ENCODE measurements at regions of chr13 and their contacts with region 1.

Region 1: DNA sequence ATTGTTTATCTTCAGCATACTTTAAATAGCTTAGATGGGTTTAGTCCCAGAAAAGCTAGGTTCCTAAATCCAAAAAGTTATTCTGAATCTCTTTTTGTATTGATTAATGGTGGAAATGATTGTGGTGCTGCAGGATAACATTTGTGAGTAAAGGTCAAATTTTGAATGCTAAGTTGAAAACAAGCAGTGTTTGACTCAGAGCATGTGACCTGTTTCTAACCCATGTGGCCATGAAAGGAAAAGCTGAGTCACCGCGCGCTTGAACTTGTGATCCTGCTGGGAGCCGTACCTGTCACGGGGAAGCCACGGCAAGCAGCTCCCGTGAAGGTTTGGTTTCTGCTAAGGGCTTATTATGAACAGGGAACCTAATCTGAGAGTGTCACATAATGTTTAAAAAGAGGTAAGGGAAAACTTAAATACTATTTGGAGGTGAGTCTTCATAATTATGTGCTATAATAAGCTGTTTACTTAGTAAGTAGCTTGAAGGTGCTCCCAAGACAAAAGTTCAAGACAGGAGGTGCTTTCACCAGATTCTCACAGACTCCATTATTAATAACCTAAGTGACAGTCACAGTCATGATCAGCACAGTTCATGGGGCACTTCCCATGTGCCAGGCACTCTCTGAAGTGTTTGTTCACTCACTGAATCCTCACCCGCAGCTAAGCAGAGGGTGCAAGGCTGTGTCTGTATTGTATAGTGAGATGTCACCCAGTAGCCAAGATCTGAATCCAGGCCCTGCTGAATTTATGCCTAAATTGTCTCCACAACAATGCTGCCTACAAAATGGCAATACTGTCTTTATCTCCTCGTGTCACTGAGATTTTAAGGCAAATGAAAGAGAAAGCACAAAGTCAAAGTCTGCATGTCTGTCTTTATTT is 286.5 kb downstream of the MYO16 start:
- DNase-seq: peak; percentile 95
- H3K4me3 Mint-ChIP-seq: peak overlapping the region; percentile 61
- H3K27ac Mint-ChIP-seq: peak overlapping the region; percentile 90
- H3K4me1 Mint-ChIP-seq: peaks cover 33% of the 10 kb centered on the region
- H3K27me3 Mint-ChIP-seq: no peaks in the 10 kb centered on the region
- CTCF ChIP-seq: no peak

Region 2: DNA sequence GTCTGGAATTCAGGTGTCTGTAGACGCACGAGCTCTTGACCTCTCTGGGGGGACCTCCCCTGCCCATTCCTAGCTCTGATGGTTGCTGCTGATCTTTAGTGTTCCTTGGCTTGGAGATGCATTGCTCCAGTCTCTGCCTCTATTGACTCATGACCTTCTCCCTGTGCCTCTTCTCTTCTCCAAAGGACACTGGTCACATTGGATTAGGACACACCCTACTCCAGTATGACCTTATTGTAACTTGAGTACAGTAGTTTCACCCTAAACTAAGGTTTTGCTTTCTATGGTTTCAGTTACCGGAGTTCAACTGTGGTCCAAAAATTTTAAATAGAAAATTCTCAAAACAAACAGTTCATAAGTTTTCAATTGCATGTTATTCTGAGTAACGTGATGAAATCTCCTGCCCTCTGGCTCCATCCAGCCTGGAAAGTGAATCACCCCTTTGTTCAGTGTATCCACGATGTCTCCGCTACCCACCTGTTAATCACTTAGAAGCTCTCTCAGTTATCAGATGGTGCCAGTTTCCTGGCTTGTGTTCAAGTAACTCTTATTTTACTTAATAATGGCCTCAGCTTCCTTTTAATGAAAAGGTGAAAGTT is 13.2 kb before region 1 on chr13:
- CTCF ChIA-PET with region 1: interaction called, 19 read pairs
- POLR2A ChIA-PET with region 1: interaction called, 3 read pairs
- intact Hi-C with region 1: no loop called
- DNase-seq: peak; percentile 77
- H3K4me3 Mint-ChIP-seq: no peak overlapping the region
- H3K27ac Mint-ChIP-seq: no peak overlapping the region
- H3K4me1 Mint-ChIP-seq: peaks cover 9% of the 10 kb centered on the region
- H3K27me3 Mint-ChIP-seq: no peaks in the 10 kb centered on the region
- CTCF ChIP-seq: no peak

Region 3: DNA sequence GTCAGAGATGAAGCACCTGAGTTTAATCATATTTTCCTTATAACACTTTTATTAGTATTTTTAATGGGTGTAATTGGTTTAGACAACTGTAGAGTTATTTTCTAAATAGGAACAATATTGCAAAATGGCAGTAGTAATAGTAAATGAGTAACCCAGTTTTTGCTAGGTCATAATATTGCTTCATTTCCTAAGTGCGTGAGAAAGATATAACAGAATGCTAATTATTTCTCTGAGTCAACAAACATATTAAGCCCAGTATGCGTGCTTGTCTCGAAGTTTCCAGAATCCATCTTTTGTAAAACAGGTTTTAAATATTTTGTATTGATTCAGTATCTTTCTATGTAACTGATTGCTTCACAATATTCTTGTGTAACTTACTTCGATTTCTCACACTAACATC is 28.9 kb after region 1 on chr13:
- CTCF ChIA-PET with region 1: interaction called, 10 read pairs
- POLR2A ChIA-PET with region 1: interaction called, 6 read pairs
- intact Hi-C with region 1: no loop called
- DNase-seq: peak; percentile 79
- H3K4me3 Mint-ChIP-seq: no peak overlapping the region
- H3K27ac Mint-ChIP-seq: no peak overlapping the region
- H3K4me1 Mint-ChIP-seq: peaks cover 8% of the 10 kb centered on the region
- H3K27me3 Mint-ChIP-seq: no peaks in the 10 kb centered on the region
- CTCF ChIP-seq: no peak

Region 4: DNA sequence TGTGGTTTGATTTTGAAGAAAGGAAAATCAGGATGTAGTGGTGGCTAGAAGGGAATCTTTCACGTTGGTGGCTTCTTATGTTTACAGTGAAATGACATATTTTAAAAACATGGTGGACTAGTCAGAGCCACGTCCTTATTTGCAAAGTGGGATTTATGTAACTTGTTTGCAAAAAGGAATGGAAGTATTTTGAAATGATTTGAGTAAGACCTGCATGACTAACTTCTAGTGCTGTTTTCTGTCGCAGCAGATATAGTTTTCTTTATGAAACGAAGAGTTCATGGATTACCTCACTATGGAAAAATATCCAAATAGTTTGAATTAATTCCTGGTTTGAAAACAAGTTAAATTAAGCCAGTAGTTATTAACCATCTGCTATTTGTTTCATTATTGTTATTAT is 190.0 kb after region 1 on chr13:
- CTCF ChIA-PET with region 1: no interaction called
- POLR2A ChIA-PET with region 1: no interaction called
- intact Hi-C with region 1: no loop called
- DNase-seq: no peak
- H3K4me3 Mint-ChIP-seq: no peak overlapping the region
- H3K27ac Mint-ChIP-seq: no peak overlapping the region
- H3K4me1 Mint-ChIP-seq: no peaks in the 10 kb centered on the region
- H3K27me3 Mint-ChIP-seq: no peaks in the 10 kb centered on the region
- CTCF ChIP-seq: no peak

Region 5: GRCh38 chr13:109145631-109146030 is 229.8 kb after region 1 on chr13:
- CTCF ChIA-PET with region 1: interaction called, 6 read pairs
- POLR2A ChIA-PET with region 1: interaction called, 11 read pairs
- intact Hi-C with region 1: loop called (anchors 5 kb)
- DNase-seq: peak; percentile 72
- H3K4me3 Mint-ChIP-seq: no peak overlapping the region
- H3K27ac Mint-ChIP-seq: no peak overlapping the region
- H3K4me1 Mint-ChIP-seq: peaks cover 30% of the 10 kb centered on the region
- H3K27me3 Mint-ChIP-seq: no peaks in the 10 kb centered on the region
- CTCF ChIP-seq: peak; percentile 76

Region 6: DNA sequence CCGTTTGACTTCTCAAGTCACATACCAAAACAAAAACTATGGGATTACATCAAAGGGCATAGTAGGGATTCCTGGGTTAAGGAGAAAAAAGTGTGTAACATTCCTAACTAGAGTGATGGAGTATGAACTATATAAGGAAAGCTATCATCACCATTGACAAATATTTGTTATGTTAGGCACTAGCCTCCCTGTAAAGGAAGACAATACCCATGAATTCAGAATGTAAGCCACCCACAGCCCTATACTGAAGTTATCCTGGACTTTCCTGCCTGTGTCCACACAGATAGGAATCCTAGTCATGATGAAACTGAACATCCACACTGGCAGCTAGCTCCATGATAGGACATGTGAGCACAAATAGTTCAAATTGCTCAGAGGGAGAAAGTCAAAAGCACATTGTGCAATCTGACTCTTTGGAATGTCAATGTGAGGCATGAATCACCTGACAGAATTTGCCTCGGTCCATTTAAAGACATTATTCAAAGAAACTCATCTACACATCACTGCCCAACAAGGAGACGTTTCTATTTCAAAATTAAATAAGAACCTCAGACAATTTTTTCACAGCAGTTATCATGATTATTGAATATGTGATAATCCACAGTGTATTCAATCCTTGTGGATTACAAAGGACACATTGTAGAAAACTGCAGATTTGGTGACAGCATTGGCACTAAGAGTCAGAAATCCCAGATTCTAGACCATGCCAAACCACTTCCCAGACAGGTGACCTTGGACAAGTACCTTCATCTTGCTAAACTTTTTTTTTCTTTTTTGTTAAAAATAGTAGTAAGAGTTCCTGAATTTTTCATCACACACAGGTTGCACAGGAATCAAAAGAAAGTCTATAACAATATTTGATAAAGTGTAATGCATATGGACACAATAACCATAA is 341.2 kb after region 1 on chr13:
- CTCF ChIA-PET with region 1: interaction called, 3 read pairs
- POLR2A ChIA-PET with region 1: interaction called, 4 read pairs
- intact Hi-C with region 1: loop called (anchors 5 kb)
- DNase-seq: peak; percentile 99
- H3K4me3 Mint-ChIP-seq: peak overlapping the region; percentile 48
- H3K27ac Mint-ChIP-seq: peak overlapping the region; percentile 96
- H3K4me1 Mint-ChIP-seq: peaks cover 47% of the 10 kb centered on the region
- H3K27me3 Mint-ChIP-seq: no peaks in the 10 kb centered on the region
- CTCF ChIP-seq: no peak

Region 7: DNA sequence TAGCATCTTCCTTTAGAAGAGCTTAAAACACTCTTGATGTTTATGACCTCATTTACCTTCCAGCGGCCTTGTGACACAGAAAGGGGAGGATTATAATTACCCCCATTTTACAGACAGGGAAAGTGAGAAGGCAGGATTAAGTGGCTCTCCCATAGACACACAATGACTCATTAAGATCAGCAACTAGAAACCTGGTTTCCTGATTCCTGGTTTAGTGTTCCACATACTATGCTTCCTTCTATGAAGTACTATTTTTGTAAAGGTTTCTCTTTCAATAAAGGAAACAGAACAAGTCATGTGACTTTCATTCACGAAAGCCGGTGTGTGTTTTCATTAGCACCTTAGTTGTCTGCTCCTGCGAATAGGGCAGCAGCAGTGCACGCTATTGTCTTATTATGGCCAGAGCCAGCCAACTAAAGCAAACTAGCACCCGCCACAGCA is 862.2 kb after region 1 on chr13:
- CTCF ChIA-PET with region 1: interaction called, 12 read pairs
- POLR2A ChIA-PET with region 1: interaction called, 26 read pairs
- intact Hi-C with region 1: loop called (anchors 5 kb)
- DNase-seq: peak; percentile 81
- H3K4me3 Mint-ChIP-seq: peak overlapping the region; percentile 84
- H3K27ac Mint-ChIP-seq: peak overlapping the region; percentile 70
- H3K4me1 Mint-ChIP-seq: peaks cover 54% of the 10 kb centered on the region
- H3K27me3 Mint-ChIP-seq: no peaks in the 10 kb centered on the region
- CTCF ChIP-seq: no peak

Region 8: GRCh38 chr13:110108347-110109174 is 1192.7 kb after region 1 on chr13:
- CTCF ChIA-PET with region 1: interaction called, 17 read pairs
- POLR2A ChIA-PET with region 1: interaction called, 3 read pairs
- intact Hi-C with region 1: loop called (anchors 2 kb)
- DNase-seq: peak; percentile 87
- H3K4me3 Mint-ChIP-seq: no peak overlapping the region
- H3K27ac Mint-ChIP-seq: no peak overlapping the region
- H3K4me1 Mint-ChIP-seq: peaks cover 37% of the 10 kb centered on the region
- H3K27me3 Mint-ChIP-seq: no peaks in the 10 kb centered on the region
- CTCF ChIP-seq: peak; percentile 84

Measured in MCF 10A (cell line).